ENCODE measurements at regions of chr19 and their contacts with region 1.

Region 1: GRCh38 chr19:13526552-13526951 is 20.3 kb upstream of the CACNA1A start:
- DNase-seq: peak; percentile 85
- ATAC-seq: peak; percentile 93
- H3K4me3 Mint-ChIP-seq: no peak overlapping the region
- H3K27ac Mint-ChIP-seq: no peak overlapping the region
- H3K4me1 Mint-ChIP-seq: peaks cover 5% of the 10 kb centered on the region
- H3K27me3 Mint-ChIP-seq: peaks cover 9% of the 10 kb centered on the region; the same call in 1 of the 2 replicates
- CTCF ChIP-seq: peak; percentile 46; the same call in 1 of the 2 replicates

Region 2: GRCh38 chr19:13505761-13506470 is 20.6 kb before region 1 on chr19:
- CTCF ChIA-PET with region 1: interaction called, 16 read pairs
- POLR2A ChIA-PET with region 1: interaction called, 4 read pairs
- DNase-seq: peak; percentile 53
- ATAC-seq: peak; percentile 62
- H3K4me3 Mint-ChIP-seq: peak overlapping the region; percentile 87
- H3K27ac Mint-ChIP-seq: no peak overlapping the region
- H3K4me1 Mint-ChIP-seq: peaks cover 38% of the 10 kb centered on the region
- H3K27me3 Mint-ChIP-seq: peaks cover 28% of the 10 kb centered on the region
- CTCF ChIP-seq: no peak

Region 3: DNA sequence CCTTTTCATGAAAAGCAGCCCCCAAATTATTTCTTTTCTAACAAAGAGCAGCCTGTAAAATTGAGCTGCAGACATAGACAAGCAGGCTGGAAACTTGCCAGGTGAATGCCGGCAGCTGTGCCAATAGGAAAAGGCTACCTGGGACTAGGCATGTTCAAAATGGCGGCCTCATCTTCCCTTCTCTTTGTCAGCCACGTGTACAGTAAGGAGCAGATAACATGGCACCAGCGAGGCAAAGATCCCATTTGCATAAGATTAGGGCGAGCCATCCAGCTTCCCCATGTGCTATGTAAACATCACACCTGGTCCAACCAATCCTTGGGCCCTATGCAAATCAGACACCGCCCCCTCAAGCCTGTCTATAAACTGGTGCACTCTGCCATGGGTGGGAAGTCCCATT is 10.9 kb after region 1 on chr19:
- CTCF ChIA-PET with region 1: interaction called, 17 read pairs
- POLR2A ChIA-PET with region 1: interaction called, 3 read pairs
- DNase-seq: peak; percentile 40
- ATAC-seq: peak; percentile 91
- H3K4me3 Mint-ChIP-seq: no peak overlapping the region
- H3K27ac Mint-ChIP-seq: no peak overlapping the region
- H3K4me1 Mint-ChIP-seq: peaks cover 11% of the 10 kb centered on the region
- H3K27me3 Mint-ChIP-seq: peaks cover 32% of the 10 kb centered on the region
- CTCF ChIP-seq: no peak

Region 4: GRCh38 chr19:13574933-13575332 is 48.4 kb after region 1 on chr19:
- CTCF ChIA-PET with region 1: interaction called, 14 read pairs
- POLR2A ChIA-PET with region 1: no interaction called
- DNase-seq: peak; percentile 47
- ATAC-seq: peak; percentile 53; the same call in 1 of the 2 replicates
- H3K4me3 Mint-ChIP-seq: no peak overlapping the region
- H3K27ac Mint-ChIP-seq: no peak overlapping the region
- H3K4me1 Mint-ChIP-seq: peaks cover 3% of the 10 kb centered on the region; the same call in 1 of the 2 replicates
- H3K27me3 Mint-ChIP-seq: peaks cover 10% of the 10 kb centered on the region
- CTCF ChIP-seq: no peak

Measured in WTC11 (cell line).